Psoas muscle (tissue), 8 donors: ENCODE measurements at regions of chr18 and their contacts with region 1.

Region 1: GRCh38 chr18:58900015-58900649 is 35.5 kb downstream of the ZNF532 start:
- DNase-seq: no peak
- ATAC-seq: peak in 1 of 4 donors; percentile 34
- H3K4me3 ChIP-seq: no peak overlapping the region
- H3K27ac ChIP-seq: peak overlapping the region; percentile 20
- H3K4me1 ChIP-seq: peaks cover 13% of the 10 kb centered on the region
- H3K27me3 ChIP-seq: no peaks in the 10 kb centered on the region
- CTCF ChIP-seq: no peak

Region 2: GRCh38 chr18:58864146-58865032 is 35.7 kb before region 1 on chr18 and contains the start of gene ZNF532:
- intact Hi-C with region 1: loop called in 1 of 2 experiments (anchors 5 kb)
- DNase-seq: no peak
- ATAC-seq: peak; percentile 24 to 51 (median 32)
- H3K4me3 ChIP-seq: peak within 1 kb of the TSS; percentile 73
- H3K27ac ChIP-seq: peak within 1 kb of the TSS; percentile 99
- H3K4me1 ChIP-seq: peaks cover 76% of the 10 kb centered on the region
- H3K27me3 ChIP-seq: no peaks in the 10 kb centered on the region
- CTCF ChIP-seq: no peak
- total RNA-seq, gene ZNF532: 68.8 to 105 (median 84.7) TPM

Region 3: DNA sequence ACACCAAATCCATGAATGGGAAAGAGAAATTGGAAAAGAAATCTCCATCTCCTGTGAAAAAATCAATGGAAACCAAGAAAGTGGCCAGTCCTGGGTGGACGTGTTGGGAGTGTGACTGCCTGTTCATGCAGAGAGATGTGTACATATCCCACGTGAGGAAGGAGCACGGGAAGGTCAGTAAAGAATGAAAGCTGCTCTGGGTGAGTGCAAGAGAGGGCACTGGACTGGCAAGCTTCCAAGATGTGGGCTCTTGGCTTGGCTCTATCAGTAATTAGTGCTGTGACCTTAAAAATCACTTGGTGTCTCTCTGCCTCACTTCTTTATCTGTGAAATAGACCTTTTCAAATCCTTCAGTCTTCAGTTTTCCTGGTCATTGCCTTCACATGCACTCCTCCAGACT is 53.5 kb after region 1 on chr18:
- intact Hi-C with region 1: loop called in 1 of 2 experiments (anchors 10 kb)
- DNase-seq: no peak
- ATAC-seq: peak in 3 of 4 donors; percentile 48 to 64 (median 59)
- H3K4me3 ChIP-seq: no peak overlapping the region
- H3K27ac ChIP-seq: no peak overlapping the region
- H3K4me1 ChIP-seq: peaks cover 15% of the 10 kb centered on the region
- H3K27me3 ChIP-seq: no peaks in the 10 kb centered on the region
- CTCF ChIP-seq: no peak

Region 4: DNA sequence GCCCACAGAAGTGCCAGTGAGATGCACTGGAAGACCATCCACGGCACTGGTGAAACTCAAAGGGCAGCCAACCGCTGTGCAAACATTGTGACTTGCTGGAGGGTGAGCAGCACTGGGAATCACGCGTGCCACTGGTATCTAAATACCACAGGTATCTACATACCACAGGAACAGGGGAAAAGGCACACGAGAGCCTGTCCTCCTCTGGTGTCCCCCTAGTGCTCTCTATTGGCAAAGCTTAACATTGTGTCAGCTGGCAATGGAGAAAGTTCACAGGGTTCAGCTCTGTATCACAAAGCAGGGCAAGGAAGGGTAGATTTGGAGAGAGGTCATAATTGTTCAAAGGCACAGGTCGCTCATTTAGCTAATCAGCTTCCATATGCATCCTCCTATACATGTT is 226.9 kb after region 1 on chr18:
- intact Hi-C with region 1: no loop called
- DNase-seq: no peak
- ATAC-seq: no peak
- H3K4me3 ChIP-seq: no peak overlapping the region
- H3K27ac ChIP-seq: no peak overlapping the region
- H3K4me1 ChIP-seq: no peaks in the 10 kb centered on the region
- H3K27me3 ChIP-seq: peaks cover 0 to 41% (median 6%) of the 10 kb centered on the region in 3 donors
- CTCF ChIP-seq: no peak